Naive thymus-derived CD4-positive, alpha-beta T cell (primary cell): ENCODE measurements at regions of chr1 and their contacts with region 1.

Region 1: GRCh38 chr1:36223993-36224536 is at the start of gene THRAP3:
- DNase-seq: peak; percentile 96 to 100 (median 100)
- ATAC-seq: peak; percentile 92
- H3K4me3 ChIP-seq: peak within 1 kb of the TSS; percentile 69
- H3K4me3 Mint-ChIP-seq: peak within 1 kb of the TSS; percentile 96 to 99 (median 98)
- H3K27ac ChIP-seq: peak within 1 kb of the TSS; percentile 98
- H3K27ac Mint-ChIP-seq: peak within 1 kb of the TSS; percentile 96 to 100 (median 100)
- H3K4me1 ChIP-seq: peaks cover 27 to 29% of the 10 kb centered on the region in 2 donors
- H3K4me1 Mint-ChIP-seq: peaks cover 21 to 43% (median 35%) of the 10 kb centered on the region in 7 donors
- H3K27me3 ChIP-seq: no peaks in the 10 kb centered on the region
- H3K27me3 Mint-ChIP-seq: no peaks in the 10 kb centered on the region
- total RNA-seq, gene THRAP3: 62.1 to 138 (median 122) TPM

Region 2: DNA sequence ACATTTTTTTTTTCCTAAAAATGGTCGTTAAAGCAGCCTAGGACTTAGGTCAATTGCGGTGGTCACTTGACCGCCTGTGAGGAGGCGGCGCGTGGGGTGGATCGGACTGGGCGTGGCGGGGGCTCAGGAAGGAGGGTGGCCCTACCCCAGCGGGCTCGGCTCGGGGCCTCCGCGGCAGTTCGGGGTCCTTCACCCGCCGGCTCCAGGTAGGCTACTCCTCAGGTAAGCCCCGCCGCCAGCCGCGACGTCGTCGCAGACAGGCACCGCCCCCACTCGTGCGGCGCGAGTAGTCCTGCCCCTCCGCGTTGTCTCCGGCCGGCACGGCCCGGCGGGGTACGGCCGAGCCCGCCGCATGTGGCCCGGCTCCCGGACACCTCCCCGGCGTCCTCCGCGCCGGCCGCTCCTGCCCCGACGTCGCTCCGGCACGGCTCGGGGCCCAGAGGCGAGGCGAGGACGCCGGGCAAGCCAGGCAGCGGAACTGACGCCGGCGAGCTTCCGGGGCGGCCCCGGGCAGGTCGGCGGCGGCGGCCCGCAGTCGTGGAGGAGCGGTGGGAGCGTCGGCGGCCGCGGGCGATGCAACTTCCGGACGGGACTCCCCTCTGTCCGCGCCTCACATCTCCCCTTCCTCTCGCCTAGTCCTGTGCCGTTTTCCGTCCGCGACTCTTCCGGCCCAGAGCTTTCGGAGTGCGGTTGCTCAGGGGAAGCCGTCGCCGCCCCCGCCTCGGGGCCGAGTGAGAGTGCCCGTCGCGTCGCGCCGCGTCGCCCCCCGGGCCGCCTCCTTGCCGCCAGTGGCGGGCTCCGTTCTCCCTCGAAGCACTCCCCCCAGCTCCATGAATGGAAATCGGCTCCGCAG is 293.2 kb before region 1 on chr1 and contains the start of gene AGO3:
- CTCF ChIA-PET with region 1: no interaction called
- POLR2A ChIA-PET with region 1: interaction called, 3 read pairs
- intact Hi-C with region 1: loop called (anchors 1 to 10 kb)
- DNase-seq: peak; percentile 79 to 90 (median 86)
- ATAC-seq: peak; percentile 91
- H3K4me3 ChIP-seq: peak within 1 kb of the TSS; percentile 93
- H3K4me3 Mint-ChIP-seq: peak within 1 kb of the TSS; percentile 84 to 97 (median 92)
- H3K27ac ChIP-seq: peak within 1 kb of the TSS; percentile 95
- H3K27ac Mint-ChIP-seq: peak within 1 kb of the TSS; percentile 94 to 98 (median 96)
- H3K4me1 ChIP-seq: peaks cover 21 to 22% of the 10 kb centered on the region in 2 donors
- H3K4me1 Mint-ChIP-seq: peaks cover 14 to 46% (median 44%) of the 10 kb centered on the region in 7 donors
- H3K27me3 ChIP-seq: no peaks in the 10 kb centered on the region
- H3K27me3 Mint-ChIP-seq: no peaks in the 10 kb centered on the region
- total RNA-seq, gene AGO3: 27.2 to 49.2 (median 39.4) TPM

Region 3: DNA sequence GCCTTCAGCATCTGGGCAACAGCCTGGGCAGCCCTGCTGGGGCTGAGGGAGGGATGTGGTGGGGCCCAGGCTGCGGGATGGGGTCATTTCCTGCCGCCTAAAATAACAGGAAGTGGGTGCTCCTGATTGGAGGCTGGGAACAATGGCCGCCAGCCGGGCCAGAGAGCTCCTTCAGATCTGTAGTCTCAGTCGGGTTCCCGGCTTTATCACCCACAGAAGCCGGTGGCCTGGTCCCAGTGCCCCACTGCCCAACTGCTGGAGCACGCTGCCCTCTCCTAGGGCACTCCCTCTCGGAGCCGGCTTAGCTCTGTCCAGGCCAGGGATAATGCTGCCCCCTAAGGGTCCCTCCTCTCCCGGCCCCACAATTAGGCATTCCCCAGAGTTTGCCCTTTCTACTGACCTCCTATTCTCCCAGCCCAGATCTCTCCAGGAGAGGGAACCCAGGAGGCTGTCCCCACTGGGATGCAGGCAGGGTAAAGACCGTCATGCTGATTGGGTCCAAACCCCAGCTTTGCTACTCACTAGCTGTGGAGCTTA is 63.0 kb before region 1 on chr1:
- CTCF ChIA-PET with region 1: no interaction called
- POLR2A ChIA-PET with region 1: interaction called, 96 read pairs
- intact Hi-C with region 1: loop called in 1 of 2 experiments (anchors 1 kb)
- DNase-seq: peak; percentile 27 to 72 (median 66)
- ATAC-seq: peak; percentile 44
- H3K4me3 ChIP-seq: peak overlapping the region; percentile 59
- H3K4me3 Mint-ChIP-seq: peak overlapping the region; percentile 79 to 92 (median 87)
- H3K27ac ChIP-seq: peak overlapping the region; percentile 94
- H3K27ac Mint-ChIP-seq: peak overlapping the region; percentile 92 to 99 (median 97)
- H3K4me1 ChIP-seq: peaks cover 56 to 66% of the 10 kb centered on the region in 2 donors
- H3K4me1 Mint-ChIP-seq: peaks cover 52 to 79% (median 70%) of the 10 kb centered on the region in 7 donors
- H3K27me3 ChIP-seq: no peaks in the 10 kb centered on the region
- H3K27me3 Mint-ChIP-seq: no peaks in the 10 kb centered on the region

Region 4: DNA sequence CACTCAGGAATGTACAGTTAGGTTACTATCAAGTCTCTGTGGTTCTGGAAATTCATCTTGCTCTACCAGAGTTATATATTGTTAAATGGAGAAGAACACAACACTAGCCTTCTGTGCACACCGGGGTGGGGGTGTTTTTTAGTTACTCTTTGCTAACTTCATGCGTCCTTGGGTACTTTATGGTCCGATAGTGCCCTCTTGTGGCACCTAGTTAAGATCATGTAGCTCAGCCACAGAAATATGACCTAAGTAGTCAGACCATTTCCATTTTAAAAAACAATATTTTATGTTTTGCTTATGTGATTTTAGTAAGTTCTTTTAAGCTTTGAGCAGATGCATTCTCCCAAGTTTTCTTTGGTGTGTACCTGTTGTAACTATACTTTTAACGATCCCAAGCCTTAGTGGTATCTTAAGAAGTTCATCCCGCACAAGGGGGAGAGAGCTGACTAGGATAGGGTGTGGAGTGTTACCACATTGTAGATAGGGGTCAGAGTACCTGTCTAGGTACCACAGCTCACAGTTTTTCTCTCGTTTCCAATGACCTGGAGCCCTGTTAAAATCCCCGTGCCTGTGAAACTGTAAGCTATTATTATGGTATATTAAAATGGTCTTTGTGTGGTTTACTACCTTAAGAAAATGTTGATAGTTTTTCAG is 61.5 kb after region 1 on chr1:
- CTCF ChIA-PET with region 1: no interaction called
- POLR2A ChIA-PET with region 1: interaction called, 6 read pairs
- intact Hi-C with region 1: loop called (anchors 1 to 5 kb)
- DNase-seq: peak in 7 of 9 donors; percentile 60 to 80 (median 73)
- ATAC-seq: peak; percentile 96
- H3K4me3 ChIP-seq: no peak overlapping the region
- H3K4me3 Mint-ChIP-seq: no peak overlapping the region
- H3K27ac ChIP-seq: no peak overlapping the region
- H3K27ac Mint-ChIP-seq: peak overlapping the region in 8 of 9 donors; percentile 3 to 87 (median 42)
- H3K4me1 ChIP-seq: no peaks in the 10 kb centered on the region
- H3K4me1 Mint-ChIP-seq: peaks cover 4 to 34% (median 17%) of the 10 kb centered on the region in 7 donors
- H3K27me3 ChIP-seq: no peaks in the 10 kb centered on the region
- H3K27me3 Mint-ChIP-seq: no peaks in the 10 kb centered on the region

Region 5: DNA sequence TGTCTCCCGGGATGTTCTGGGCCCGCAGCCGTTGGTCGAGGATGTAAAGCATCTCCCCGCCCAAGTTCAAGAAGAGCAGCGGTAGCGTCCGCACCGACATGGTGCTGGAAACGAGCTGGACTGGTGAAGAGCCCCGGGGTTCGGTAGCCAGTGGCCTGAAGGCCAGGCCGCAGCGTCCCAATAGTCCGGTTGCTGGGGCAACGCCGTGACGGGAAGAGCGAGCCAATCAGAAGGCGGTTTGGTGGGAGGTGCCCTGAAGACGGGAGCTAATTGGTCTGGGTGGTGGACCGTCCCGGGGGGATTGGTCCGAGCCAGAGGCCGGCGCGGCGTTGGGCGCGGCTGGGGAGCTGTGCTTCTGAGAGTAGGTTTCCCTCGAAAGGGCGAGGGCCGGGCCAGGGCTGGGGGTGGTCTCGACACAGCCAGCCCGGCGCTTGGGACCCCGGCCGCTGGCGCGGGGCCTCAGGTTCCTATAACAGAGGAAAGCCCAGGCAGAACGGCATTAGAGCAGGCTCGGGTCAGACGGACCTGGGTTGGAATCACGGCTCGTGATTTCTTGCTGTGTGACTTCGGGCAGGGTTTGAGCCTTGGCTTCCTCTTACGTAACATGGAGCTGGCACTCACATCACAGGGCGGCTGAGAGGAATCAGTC is 226.3 kb after region 1 on chr1 and contains the start of gene OSCP1:
- CTCF ChIA-PET with region 1: no interaction called
- POLR2A ChIA-PET with region 1: no interaction called
- intact Hi-C with region 1: loop called (anchors 1 to 5 kb)
- DNase-seq: peak; percentile 73 to 88 (median 83)
- ATAC-seq: peak; percentile 98
- H3K4me3 ChIP-seq: peak within 1 kb of the TSS; percentile 93
- H3K4me3 Mint-ChIP-seq: peak within 1 kb of the TSS; percentile 88 to 98 (median 92)
- H3K27ac ChIP-seq: peak within 1 kb of the TSS; percentile 94
- H3K27ac Mint-ChIP-seq: peak within 1 kb of the TSS; percentile 81 to 99 (median 96)
- H3K4me1 ChIP-seq: peaks cover 0 to 10% of the 10 kb centered on the region in 2 donors
- H3K4me1 Mint-ChIP-seq: peaks cover 7 to 30% (median 23%) of the 10 kb centered on the region in 7 donors
- H3K27me3 ChIP-seq: no peaks in the 10 kb centered on the region
- H3K27me3 Mint-ChIP-seq: no peaks in the 10 kb centered on the region
- total RNA-seq, gene OSCP1: 0.65 to 2.0 (median 0.93) TPM